ENCODE measurements at regions of chr5 and their contacts with region 1.

Region 1: DNA sequence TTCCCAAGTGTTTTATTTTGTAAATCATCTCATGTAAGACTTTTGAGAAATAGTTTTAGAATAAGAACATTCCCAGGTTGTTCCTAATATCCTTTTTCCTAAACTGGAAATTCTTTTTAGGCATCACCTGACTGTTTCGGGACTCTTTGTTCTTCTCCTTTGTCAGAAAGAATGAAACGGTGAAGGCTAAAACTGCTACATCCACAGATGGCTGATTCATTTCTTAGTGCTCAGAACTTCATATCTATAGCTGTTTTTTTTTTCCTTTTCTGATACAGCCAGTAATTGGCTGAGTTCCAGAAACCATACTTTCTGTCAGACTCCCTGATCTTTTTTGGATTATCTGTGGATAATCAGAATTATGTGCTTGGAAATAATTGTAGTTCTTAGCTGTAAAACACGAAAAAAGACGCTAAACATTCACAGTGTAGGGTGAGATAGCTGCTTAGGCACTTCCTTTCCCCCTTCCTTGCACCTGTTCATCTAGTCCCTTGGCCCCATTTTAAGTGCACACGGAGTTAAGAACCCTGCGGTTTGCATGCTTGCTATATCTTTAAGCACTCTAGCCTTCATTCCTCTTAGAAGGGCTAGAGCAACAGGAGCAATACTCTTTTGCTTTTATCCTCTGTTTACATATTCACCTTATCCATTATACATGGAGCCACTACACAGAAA is 283.9 kb downstream of the PJA2 start:
- DNase-seq: no peak
- ATAC-seq: no peak
- H3K4me3 ChIP-seq: no peak overlapping the region
- H3K27ac ChIP-seq: no peak overlapping the region
- H3K4me1 ChIP-seq: no peaks in the 10 kb centered on the region
- H3K27me3 ChIP-seq: no peaks in the 10 kb centered on the region
- CTCF ChIP-seq: no peak
- POLR2A ChIP-seq: no peak

Region 2: GRCh38 chr5:109192555-109193281 is 66.8 kb after region 1 on chr5:
- in situ Hi-C with region 1: no loop called
- intact Hi-C with region 1: loop called (anchors 2 kb)
- DNase-seq: no peak
- ATAC-seq: no peak
- H3K4me3 ChIP-seq: no peak overlapping the region
- H3K27ac ChIP-seq: no peak overlapping the region
- H3K4me1 ChIP-seq: no peaks in the 10 kb centered on the region
- H3K27me3 ChIP-seq: no peaks in the 10 kb centered on the region
- CTCF ChIP-seq: no peak
- POLR2A ChIP-seq: no peak